Activated naive CD8-positive, alpha-beta T cell treated with anti-CD3 and anti-CD28 coated beads, Interleukin-2, amount 10 ng/mL, durations not matched to agents 7 days and 5 days (primary cell): ENCODE measurements at regions of chr17 and their contacts with region 1.

Region 1: GRCh38 chr17:78112518-78113226 is 15.9 kb downstream of the TMC6 start:
- DNase-seq: peak; percentile 90
- ATAC-seq: peak; percentile 58
- H3K4me3 Mint-ChIP-seq: peak overlapping the region; percentile 65
- H3K27ac Mint-ChIP-seq: peak overlapping the region; percentile 93
- H3K4me1 Mint-ChIP-seq: peaks cover 29% of the 10 kb centered on the region
- H3K27me3 Mint-ChIP-seq: no peaks in the 10 kb centered on the region

Region 2: DNA sequence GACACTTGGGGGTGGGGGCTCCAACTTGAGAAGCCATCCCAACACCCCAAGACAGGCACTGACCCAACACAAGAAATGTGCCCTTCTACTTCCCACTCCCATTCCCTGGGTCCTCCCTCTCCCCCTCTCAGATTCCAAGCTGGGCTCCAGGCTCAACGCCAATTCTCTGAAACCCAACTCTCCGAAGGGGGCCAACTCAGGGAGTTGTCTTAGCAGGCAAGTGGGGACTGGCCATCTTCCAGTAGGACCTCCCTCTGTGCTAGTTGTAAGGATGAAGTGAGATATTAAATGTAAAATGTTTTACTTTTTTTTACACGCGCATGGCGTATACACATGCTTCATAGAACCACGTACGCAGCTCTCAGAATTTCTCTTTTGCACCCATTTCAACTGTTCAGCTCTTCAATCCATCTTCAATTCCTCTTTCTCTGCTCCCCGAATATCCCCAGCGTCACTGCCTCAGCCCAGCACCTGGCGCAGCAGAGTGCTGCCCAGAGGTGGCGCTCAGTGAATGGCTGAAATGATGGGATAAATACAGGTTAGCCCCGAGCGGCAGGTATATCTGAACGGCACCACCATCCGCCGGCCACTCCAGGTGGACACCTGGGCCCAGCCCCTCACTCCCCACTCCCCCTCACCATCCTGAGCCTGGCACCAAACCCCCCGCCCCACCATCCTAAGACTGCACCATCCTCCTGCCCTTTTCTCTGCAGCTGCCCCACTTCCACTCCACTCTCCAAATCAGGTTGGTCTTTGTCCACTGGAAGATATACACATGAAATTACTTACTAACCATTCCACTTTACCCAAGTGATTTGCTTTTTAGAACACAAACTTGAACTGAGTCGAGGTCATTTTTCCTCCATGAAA is 198.1 kb before region 1 on chr17:
- POLR2A ChIA-PET with region 1: no interaction called
- DNase-seq: no peak
- ATAC-seq: no peak
- H3K4me3 Mint-ChIP-seq: no peak overlapping the region
- H3K27ac Mint-ChIP-seq: no peak overlapping the region
- H3K4me1 Mint-ChIP-seq: peaks cover 9% of the 10 kb centered on the region
- H3K27me3 Mint-ChIP-seq: peaks cover 48% of the 10 kb centered on the region

Region 3: DNA sequence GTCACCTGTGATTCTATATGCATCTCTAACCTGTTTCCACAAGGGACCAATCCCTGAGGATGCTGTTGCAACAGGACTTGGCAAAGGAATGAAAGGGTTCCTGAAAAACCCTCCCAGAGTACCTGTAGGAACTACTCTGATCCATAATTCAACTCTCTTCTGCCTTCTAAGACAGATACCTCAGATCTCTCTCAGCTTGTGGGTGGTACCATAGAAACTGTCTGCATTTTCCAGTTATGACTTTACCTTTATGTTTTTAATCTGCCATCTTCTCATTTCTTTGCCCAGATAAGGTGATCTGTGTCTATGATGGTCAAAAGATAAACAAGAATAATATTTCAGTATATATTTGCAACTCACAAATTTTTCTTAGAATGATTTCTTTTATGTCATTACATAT is 49.2 kb before region 1 on chr17:
- POLR2A ChIA-PET with region 1: no interaction called
- DNase-seq: no peak
- ATAC-seq: no peak
- H3K4me3 Mint-ChIP-seq: no peak overlapping the region
- H3K27ac Mint-ChIP-seq: no peak overlapping the region
- H3K4me1 Mint-ChIP-seq: peaks cover 3% of the 10 kb centered on the region
- H3K27me3 Mint-ChIP-seq: no peaks in the 10 kb centered on the region

Region 4: DNA sequence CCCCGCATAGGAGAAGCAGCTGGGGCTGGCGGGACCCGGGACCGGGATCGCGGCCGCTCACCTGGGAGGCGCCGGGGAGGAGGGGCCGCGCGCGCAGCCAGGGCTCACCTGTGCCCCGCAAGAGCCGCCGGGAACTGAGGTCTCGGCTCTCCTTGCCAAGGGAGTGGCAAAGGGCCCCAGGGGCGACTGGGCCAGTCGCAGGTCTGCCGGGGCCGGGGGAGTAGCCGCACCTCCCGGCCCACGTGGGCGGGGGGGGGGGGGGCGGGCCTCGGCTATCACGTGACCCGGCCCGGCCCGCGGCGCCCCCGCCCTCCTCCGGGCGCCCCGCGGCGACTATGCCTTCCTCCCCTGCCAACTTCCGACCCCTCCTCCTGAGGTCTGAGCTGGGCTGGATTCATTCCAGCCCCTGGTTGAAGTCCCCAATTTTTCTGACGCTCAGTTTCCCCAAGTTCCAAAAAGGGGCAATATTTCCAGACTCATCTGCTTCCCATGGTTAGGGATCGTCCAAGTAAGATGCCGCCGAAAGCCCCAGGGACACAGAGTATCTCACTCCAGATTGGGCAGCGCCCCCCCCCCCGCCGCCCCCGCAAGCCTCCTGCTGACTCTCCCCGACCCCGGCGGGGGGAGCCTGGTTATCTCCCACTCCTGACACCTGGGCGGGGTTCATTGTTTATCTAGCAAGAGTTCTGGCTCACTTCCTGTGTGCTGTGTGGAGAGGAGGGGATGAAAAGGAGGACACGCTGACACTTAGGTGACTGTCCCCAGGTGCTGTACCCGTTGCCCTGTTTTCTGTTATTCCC is 16.1 kb after region 1 on chr17 and contains the start of gene TMC6:
- POLR2A ChIA-PET with region 1: interaction called, 380 read pairs
- DNase-seq: peak; percentile 83
- ATAC-seq: peak; percentile 15
- H3K4me3 Mint-ChIP-seq: peak within 1 kb of the TSS; percentile 99
- H3K27ac Mint-ChIP-seq: peak within 1 kb of the TSS; percentile 100
- H3K4me1 Mint-ChIP-seq: peaks cover 29% of the 10 kb centered on the region
- H3K27me3 Mint-ChIP-seq: no peaks in the 10 kb centered on the region
- total RNA-seq, gene TMC6: 638 to 646 TPM

Region 5: DNA sequence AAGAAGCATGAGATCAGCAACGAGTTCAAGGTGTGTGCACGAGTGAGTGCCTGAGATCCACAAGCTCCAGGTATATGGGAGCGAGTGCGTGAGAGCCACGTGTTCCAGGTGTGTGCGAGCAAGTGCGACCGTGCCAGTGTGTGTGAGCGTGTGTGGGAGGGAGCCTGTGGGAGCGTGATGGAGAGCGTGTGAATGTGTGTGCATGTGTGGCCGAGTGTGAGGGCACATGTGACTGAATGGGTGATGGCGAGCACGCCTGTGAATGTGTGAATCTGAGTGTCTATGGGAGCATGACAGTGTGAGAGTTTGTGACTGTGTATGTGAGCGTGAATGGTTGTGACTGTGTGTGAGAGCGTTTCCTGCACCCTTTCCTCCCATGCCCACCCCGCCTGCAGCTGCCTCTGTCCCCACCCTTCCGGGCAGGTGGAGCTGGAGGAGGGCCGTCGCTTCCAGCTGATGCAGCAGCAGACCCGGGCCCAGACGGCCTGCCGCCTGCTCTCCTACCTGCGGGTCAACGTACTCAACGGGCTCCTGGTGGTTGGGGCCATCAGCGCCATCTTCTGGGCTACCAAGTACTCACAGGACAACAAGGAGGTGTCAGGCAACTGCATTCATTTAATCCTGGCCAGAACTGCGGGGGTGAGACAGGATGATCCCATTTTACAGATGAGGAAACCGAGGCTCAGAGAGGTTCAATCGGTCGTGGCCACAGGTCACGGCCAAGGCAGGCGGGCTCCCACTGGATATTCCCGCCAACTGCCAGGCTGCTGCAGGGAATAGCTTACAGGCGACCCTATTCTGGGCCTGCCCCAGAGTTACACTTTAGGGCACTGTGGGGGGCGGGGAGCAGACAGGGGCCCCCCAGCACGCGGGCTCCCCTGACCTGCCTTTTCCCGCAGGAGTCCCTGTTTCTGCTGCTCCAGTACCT is 21.6 kb after region 1 on chr17:
- POLR2A ChIA-PET with region 1: interaction called, 380 read pairs
- DNase-seq: peak; percentile 79
- ATAC-seq: peak; percentile 11
- H3K4me3 Mint-ChIP-seq: peak overlapping the region; percentile 93
- H3K27ac Mint-ChIP-seq: peak overlapping the region; percentile 81
- H3K4me1 Mint-ChIP-seq: peaks cover 53% of the 10 kb centered on the region
- H3K27me3 Mint-ChIP-seq: no peaks in the 10 kb centered on the region

Region 6: GRCh38 chr17:78140169-78140976 is 27.7 kb after region 1 on chr17:
- POLR2A ChIA-PET with region 1: interaction called, 380 read pairs
- DNase-seq: peak; percentile 97
- ATAC-seq: peak; percentile 73
- H3K4me3 Mint-ChIP-seq: peak overlapping the region; percentile 22
- H3K27ac Mint-ChIP-seq: peak overlapping the region; percentile 68
- H3K4me1 Mint-ChIP-seq: peaks cover 45% of the 10 kb centered on the region
- H3K27me3 Mint-ChIP-seq: no peaks in the 10 kb centered on the region

Region 7: DNA sequence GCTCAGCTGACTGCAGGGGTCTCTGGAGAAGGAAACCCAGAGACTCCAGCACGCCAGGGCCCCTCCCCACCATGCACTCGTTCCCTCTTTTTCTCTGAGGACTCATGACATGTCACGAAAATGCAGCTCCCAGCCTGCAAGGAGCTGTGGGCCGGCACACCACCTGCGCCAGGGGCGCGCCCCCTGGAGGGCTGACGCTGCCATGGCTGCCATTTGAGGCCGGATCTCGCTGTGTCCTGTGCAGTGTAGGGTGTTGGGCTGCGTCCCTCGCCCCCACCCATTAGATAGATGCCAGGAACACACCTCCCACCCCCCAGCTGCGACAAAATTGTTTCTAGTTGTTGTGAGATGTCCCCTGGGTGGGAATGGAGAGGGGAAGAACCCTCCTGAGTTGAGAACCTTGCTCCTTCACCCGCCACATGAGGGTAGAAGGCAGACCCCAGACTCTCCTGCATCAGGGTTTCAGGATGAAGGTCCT is 63.9 kb after region 1 on chr17:
- POLR2A ChIA-PET with region 1: interaction called, 11 read pairs
- DNase-seq: peak; percentile 84
- ATAC-seq: peak; percentile 83
- H3K4me3 Mint-ChIP-seq: no peak overlapping the region
- H3K27ac Mint-ChIP-seq: no peak overlapping the region
- H3K4me1 Mint-ChIP-seq: peaks cover 41% of the 10 kb centered on the region
- H3K27me3 Mint-ChIP-seq: no peaks in the 10 kb centered on the region